ENCODE measurements at regions of chr4 and their contacts with region 1.

Region 1: DNA sequence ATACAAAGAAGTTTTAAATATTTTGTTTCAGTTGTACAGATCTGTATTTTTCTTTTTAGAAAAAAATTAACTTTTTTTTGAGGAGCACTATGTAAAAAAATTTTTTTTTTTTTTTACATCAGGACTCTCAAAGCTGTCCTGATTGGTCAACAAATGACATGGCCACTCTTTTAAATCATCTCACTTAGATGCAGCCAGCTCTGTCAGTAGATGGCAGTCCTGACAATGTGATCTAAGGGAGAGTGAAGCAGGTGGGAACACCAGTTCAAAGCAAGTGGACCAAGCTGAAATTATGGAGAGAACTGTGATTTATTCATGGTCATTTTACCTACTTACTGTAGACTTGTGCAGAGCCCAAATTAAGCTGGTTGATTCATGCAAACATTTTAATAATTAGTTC is 174.6 kb upstream of the GPRIN3 start:
- DNase-seq: no peak
- H3K4me3 ChIP-seq: no peak overlapping the region
- H3K27ac ChIP-seq: no peak overlapping the region
- H3K27me3 ChIP-seq: no peaks in the 10 kb centered on the region
- CTCF ChIP-seq: peak in 29 of 56 donors; percentile 6 to 50 (median 26)

Region 2: DNA sequence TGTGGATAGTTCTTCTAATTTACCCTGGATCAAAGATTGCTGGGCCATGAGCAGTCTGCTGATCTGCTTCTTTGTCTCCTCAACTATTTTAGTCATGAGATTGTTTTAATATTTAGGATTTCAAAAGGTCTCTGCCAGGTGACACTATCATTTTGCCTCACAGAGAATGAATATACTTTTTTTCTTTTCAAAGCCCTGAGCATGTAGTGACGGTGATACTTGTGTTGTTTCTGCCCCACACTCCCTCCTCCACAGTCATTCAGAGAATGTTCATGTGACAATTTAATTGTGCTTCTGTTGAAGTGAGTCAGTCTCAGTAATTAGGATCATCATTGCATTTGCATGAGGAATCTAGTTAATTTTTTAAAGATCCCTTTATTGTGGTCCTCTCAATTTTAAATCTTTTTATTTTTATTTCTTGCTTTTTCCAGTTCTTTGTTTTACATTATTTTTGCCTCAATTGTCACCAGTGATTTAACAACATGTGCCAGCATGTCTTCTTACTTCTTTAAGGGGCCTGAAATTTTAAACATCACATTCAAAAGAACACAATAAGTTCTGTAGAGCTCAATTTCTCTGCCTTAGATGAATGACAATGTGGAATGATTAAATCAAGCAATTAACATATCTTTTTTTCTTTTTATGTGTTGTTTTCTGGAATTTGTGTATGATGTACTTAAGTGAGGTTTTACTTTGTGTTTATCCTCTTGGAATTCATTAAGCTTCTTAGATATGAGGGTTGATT is 424.7 kb after region 1 on chr4:
- intact Hi-C with region 1: loop called in 1 of 2 experiments (anchors 10 kb)
- DNase-seq: no peak
- H3K4me3 ChIP-seq: no peak overlapping the region
- H3K27ac ChIP-seq: no peak overlapping the region
- H3K27me3 ChIP-seq: peaks cover 0 to 4% (median 0%) of the 10 kb centered on the region in 45 donors
- CTCF ChIP-seq: no peak

Measured in dorsolateral prefrontal cortex (tissue), 120 donors.